ENCODE measurements at regions of chr10 and their contacts with region 1.

Region 1: GRCh38 chr10:3248888-3249758 is 76.5 kb upstream of the PITRM1 start:
- DNase-seq: no peak
- ATAC-seq: no peak

Region 2: DNA sequence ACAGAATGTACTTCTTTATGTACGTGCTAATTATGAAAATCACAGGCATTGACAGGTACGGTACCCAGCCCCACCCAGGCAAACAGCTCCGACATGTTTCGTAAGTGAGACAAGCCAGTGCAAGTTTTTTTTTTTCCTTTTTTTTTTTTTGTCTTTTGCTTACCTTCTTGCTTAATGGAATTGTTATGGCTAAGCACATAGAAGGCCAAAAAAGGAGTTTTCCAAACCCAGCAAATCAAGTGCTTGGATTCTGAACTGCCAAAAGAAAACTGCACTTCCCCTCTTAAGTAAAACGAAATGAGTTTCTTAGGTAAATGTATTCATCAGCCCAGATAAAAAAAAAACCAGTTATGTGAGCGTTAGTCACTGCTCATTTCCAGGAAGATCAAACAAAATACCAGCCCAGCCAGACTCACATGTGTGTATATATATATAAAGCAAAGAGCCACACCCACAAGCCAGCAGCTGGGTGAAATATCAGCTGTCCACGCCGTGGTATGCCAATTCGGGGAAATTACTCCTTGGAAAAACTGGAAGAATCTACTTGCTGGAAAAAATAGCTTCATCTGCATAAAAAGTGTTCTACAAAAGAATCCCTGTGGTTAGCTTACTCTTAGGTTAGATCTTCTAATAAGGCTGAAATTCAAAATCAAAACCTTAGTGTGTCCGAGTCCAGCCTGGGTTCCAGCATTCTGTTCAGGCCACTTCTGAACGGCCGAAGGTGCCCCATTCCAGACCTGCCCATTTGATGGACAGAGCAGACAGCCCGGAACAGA is 527.9 kb after region 1 on chr10:
- intact Hi-C with region 1: loop called in 1 of 2 experiments (anchors 10 kb)
- DNase-seq: peak; percentile 71 to 84
- ATAC-seq: peak; percentile 59

Region 3: GRCh38 chr10:4656576-4657182 is 1407.6 kb after region 1 on chr10:
- intact Hi-C with region 1: loop called in 1 of 2 experiments (anchors 10 kb)
- DNase-seq: peak in 1 of 2 donors; percentile 51
- ATAC-seq: peak; percentile 77